ENCODE measurements at regions of chr2 and their contacts with region 1.

Region 1: DNA sequence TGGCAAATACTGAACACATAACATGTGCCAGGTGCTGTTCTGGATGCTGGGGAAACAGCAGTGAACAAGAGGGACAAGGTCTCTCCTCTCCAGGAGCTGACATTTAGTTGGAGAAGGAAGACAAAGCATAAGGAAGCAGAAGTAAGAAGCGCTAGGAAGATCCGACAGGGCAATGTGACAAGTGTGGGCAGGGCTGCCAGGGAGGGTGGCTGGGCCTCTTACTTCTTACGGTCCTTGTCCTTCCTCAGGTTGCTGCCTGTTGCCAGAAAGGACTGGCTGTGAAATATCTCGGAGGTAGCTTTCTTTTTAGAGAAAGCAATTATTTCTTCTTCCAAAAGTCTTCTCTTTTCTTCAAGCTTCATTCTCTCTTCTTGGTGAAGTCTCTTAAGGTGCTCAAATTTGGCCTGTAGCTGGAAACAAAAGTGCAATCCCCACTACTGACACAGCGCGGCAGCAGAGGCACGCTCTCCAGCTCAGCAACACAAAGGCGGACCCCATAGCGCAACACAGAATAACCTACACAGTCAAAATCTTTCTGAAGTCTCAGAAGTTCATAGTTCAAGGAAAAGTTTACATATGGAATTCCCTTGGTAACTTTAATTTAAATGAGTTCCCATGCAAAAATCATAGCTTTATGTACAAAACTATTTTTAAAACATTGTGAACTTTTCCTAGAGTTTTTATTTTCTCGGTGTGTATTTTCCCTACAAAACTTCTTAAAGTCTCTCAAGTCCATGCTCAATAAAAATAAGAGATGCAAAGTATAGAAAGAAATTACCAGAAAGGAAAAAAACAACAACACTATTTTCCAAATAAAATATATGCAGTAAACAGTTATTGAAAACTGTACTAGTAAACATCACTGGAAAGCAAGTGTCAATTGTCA is 67.7 kb downstream of the SEPTIN10 start:
- DNase-seq: no peak

Region 2: DNA sequence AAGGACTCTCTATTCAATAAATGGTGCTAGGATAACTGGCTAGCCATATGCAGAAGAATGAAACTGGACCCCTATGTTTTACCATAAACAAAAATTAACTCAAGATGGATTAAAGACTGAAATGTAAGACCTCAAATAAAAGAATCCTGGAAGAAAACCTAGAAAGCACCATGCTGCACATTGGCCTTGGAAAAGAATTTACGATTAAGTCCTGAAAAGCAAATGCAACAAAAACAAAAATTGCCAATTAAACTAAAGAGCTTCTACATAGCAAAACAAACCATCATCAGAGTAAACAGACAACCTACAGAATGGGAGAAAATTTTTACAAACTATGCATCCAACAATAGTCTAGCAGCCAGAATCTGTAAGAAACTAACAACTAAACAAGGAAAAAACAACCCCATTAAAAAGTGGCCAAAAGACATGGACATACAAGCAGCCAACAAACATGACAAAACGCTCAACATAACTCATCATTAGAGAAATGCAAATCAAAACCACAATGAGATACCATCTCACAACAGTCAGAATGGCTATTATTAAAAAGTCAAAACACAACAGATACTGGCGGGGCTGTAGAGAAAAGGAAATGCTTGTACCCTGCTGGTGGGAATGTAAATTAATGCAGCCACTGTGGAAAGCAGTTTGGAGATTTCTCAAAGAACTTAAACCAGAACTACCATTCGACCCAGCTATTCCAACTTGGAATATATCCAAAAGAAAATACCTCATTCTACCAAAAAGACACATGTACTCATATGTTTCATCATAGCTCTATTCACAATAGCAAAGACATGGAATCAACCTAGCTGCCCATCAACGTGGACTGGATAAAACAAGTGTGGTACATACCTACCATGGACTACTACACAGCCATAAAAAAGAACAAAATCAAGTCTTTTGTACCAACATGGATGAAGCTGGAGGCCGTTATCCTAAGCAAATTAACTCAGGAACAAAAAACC is 37.1 kb after region 1 on chr2:
- intact Hi-C with region 1: no loop called
- DNase-seq: no peak

Region 3: GRCh38 chr2:109613922-109614714 is 68.0 kb after region 1 on chr2 and contains the starts of genes SEPTIN10 and SOWAHC:
- intact Hi-C with region 1: loop called in 1 of 2 experiments (anchors 10 kb)
- DNase-seq: peak; percentile 99
- total RNA-seq, gene SEPTIN10: 88.3 to 115 TPM
- total RNA-seq, gene SOWAHC: 8.8 to 12.2 TPM

Region 4: GRCh38 chr2:109715313-109715805 is 169.3 kb after region 1 on chr2:
- intact Hi-C with region 1: loop called (anchors 5 to 10 kb)
- DNase-seq: peak; percentile 61

Region 5: DNA sequence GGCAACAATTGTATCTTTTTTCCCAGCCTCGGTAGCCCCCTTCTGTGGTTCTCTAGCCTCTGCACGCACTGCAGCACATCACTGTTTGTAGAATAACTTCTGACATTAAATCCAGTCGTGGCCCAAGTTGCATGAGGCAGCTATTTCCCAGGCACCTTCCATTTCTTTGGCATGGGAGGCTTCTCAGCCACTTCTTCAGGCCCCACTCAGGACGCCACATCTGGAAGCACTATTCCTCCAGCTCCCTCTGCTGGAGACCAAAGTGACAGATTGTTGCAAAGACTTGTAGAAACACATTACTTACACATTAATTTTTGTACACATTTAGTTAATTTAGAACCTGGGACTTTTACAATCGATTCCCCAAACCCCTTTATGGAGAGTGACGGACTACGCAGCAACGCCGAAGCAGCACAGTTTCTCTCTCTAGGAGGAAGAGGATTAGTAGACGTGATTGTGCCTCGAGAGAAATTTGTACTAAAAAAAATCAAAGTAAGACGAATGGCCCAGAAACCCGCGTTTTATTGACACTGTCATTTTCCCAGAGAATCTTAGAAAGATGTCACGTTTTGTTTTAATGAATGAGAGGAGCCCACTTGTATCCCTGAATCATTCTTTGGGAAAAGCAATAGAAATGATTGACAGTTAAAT is 190.2 kb after region 1 on chr2:
- intact Hi-C with region 1: loop called in 1 of 2 experiments (anchors 5 kb)
- DNase-seq: no peak

Measured in posterior vena cava (tissue), 2 donors.